CD4-positive, alpha-beta memory T cell (primary cell): ENCODE measurements at regions of chr1 and their contacts with region 1.

Region 1: DNA sequence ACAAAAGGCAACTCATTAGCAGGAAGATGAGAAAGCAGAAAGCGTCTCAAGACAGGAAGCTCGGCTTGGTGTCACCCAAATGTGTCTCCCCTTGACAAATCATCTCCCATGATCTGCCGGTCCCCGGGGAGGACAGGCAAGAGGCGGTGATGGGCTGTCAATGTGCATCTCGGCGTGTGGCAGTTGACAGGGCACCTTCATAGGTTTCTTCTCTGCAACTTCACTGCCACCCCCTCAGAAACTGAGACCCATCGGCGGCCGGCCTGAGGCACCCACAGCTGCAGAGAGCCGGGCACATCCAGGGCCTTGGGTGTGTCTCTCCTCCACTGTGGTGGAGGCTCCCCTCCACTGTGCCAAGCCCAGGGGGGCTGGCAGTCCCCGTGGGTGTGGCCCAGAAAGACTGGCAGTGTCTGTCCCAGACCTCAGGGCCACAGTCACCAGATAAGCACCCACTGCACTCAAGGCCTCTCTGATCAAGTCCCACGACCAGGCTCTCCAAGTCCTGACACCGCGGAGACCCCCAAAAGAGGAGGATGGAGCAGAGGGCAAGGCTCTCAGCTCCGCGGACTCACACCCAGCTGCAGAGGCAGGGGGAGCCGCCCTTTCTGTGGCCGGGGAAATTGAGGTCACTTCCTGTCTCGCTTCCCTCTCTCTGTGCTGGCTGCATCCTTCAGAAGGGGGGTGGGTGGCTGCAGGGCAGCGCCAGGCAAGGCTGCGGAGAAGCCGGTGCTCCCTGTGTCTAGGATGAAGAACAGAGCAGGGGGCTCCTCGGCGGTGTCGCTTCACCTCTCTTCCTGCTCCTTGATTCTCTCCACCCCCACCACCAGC is 39.6 kb upstream of the LBR start:
- DNase-seq: peak; percentile 83 to 89 (median 85)
- H3K4me3 ChIP-seq: peak overlapping the region; percentile 74 to 85
- H3K4me3 Mint-ChIP-seq: peak overlapping the region; percentile 90 to 94 (median 92)
- H3K27ac ChIP-seq: peak overlapping the region; percentile 84
- H3K27ac Mint-ChIP-seq: peak overlapping the region; percentile 92 to 98 (median 97)
- H3K4me1 ChIP-seq: peaks cover 48% of the 10 kb centered on the region
- H3K4me1 Mint-ChIP-seq: peaks cover 27 to 63% (median 45%) of the 10 kb centered on the region in 4 donors
- H3K27me3 ChIP-seq: no peaks in the 10 kb centered on the region
- H3K27me3 Mint-ChIP-seq: no peaks in the 10 kb centered on the region

Region 2: GRCh38 chr1:225428068-225428880 is 39.1 kb before region 1 on chr1:
- CTCF ChIA-PET with region 1: interaction called, 10 read pairs
- POLR2A ChIA-PET with region 1: interaction called, 166 read pairs
- intact Hi-C with region 1: loop called (anchors 1 kb)
- DNase-seq: peak; percentile 91 to 92 (median 91)
- H3K4me3 ChIP-seq: peak overlapping the region; percentile 68 to 75
- H3K4me3 Mint-ChIP-seq: peak overlapping the region; percentile 84 to 97 (median 92)
- H3K27ac ChIP-seq: peak overlapping the region; percentile 78
- H3K27ac Mint-ChIP-seq: peak overlapping the region; percentile 86 to 97 (median 96)
- H3K4me1 ChIP-seq: peaks cover 41% of the 10 kb centered on the region
- H3K4me1 Mint-ChIP-seq: peaks cover 38 to 49% (median 44%) of the 10 kb centered on the region in 4 donors
- H3K27me3 ChIP-seq: no peaks in the 10 kb centered on the region
- H3K27me3 Mint-ChIP-seq: no peaks in the 10 kb centered on the region

Region 3: DNA sequence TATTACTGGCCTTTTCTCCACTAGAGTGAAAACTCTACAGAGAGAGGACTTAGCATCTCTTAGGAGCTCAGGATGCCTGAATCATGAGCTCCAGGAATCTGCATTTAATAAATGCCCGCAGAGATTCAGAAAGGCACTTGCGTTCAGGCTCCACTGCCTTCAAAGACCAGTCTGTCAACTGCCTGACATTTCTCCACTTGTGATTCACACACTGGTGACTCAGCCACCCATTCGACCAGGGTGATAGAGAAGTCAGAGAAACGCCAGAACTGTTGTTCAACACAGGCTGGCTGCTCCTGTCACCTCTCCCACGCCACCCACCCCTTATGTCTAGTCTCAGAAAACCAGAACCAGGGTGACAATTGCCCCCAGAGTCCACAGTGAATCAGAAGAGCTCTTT is 12.7 kb before region 1 on chr1:
- CTCF ChIA-PET with region 1: interaction called, 4 read pairs
- POLR2A ChIA-PET with region 1: interaction called, 11 read pairs
- intact Hi-C with region 1: no loop called
- DNase-seq: no peak
- H3K4me3 ChIP-seq: no peak overlapping the region
- H3K4me3 Mint-ChIP-seq: no peak overlapping the region
- H3K27ac ChIP-seq: no peak overlapping the region
- H3K27ac Mint-ChIP-seq: peak overlapping the region in 2 of 7 donors; percentile 79 to 86
- H3K4me1 ChIP-seq: peaks cover 6% of the 10 kb centered on the region
- H3K4me1 Mint-ChIP-seq: peaks cover 2 to 23% (median 19%) of the 10 kb centered on the region in 4 donors
- H3K27me3 ChIP-seq: no peaks in the 10 kb centered on the region
- H3K27me3 Mint-ChIP-seq: no peaks in the 10 kb centered on the region

Region 4: GRCh38 chr1:225498549-225499136 is 31.2 kb after region 1 on chr1:
- CTCF ChIA-PET with region 1: no interaction called
- POLR2A ChIA-PET with region 1: no interaction called
- intact Hi-C with region 1: no loop called
- DNase-seq: no peak
- H3K4me3 ChIP-seq: no peak overlapping the region
- H3K4me3 Mint-ChIP-seq: no peak overlapping the region
- H3K27ac ChIP-seq: no peak overlapping the region
- H3K27ac Mint-ChIP-seq: no peak overlapping the region
- H3K4me1 ChIP-seq: no peaks in the 10 kb centered on the region
- H3K4me1 Mint-ChIP-seq: peaks cover 0 to 3% (median 0%) of the 10 kb centered on the region in 4 donors
- H3K27me3 ChIP-seq: peaks cover 4% of the 10 kb centered on the region
- H3K27me3 Mint-ChIP-seq: peaks cover 7 to 8% of the 10 kb centered on the region in 2 donors

Region 5: GRCh38 chr1:225508538-225509375 is 41.4 kb after region 1 on chr1:
- CTCF ChIA-PET with region 1: no interaction called
- POLR2A ChIA-PET with region 1: no interaction called
- intact Hi-C with region 1: no loop called
- DNase-seq: no peak
- H3K4me3 ChIP-seq: no peak overlapping the region
- H3K4me3 Mint-ChIP-seq: no peak overlapping the region
- H3K27ac ChIP-seq: no peak overlapping the region
- H3K27ac Mint-ChIP-seq: no peak overlapping the region
- H3K4me1 ChIP-seq: no peaks in the 10 kb centered on the region
- H3K4me1 Mint-ChIP-seq: no peaks in the 10 kb centered on the region
- H3K27me3 ChIP-seq: no peaks in the 10 kb centered on the region
- H3K27me3 Mint-ChIP-seq: peaks cover 9 to 10% of the 10 kb centered on the region in 2 donors

Region 6: GRCh38 chr1:225896937-225897549 is 429.6 kb after region 1 on chr1:
- CTCF ChIA-PET with region 1: no interaction called
- POLR2A ChIA-PET with region 1: interaction called, 10 read pairs
- intact Hi-C with region 1: no loop called
- DNase-seq: peak; percentile 87 to 92 (median 88)
- H3K4me3 ChIP-seq: peak overlapping the region in 1 of 2 donors; percentile 13
- H3K4me3 Mint-ChIP-seq: peak overlapping the region; percentile 72 to 92 (median 82)
- H3K27ac ChIP-seq: peak overlapping the region; percentile 72
- H3K27ac Mint-ChIP-seq: peak overlapping the region; percentile 94 to 99 (median 98)
- H3K4me1 ChIP-seq: peaks cover 45% of the 10 kb centered on the region
- H3K4me1 Mint-ChIP-seq: peaks cover 34 to 65% (median 46%) of the 10 kb centered on the region in 4 donors
- H3K27me3 ChIP-seq: no peaks in the 10 kb centered on the region
- H3K27me3 Mint-ChIP-seq: no peaks in the 10 kb centered on the region

Region 7: GRCh38 chr1:225987491-225988316 is 520.3 kb after region 1 on chr1:
- CTCF ChIA-PET with region 1: interaction called, 11 read pairs
- POLR2A ChIA-PET with region 1: interaction called, 4 read pairs
- intact Hi-C with region 1: no loop called
- DNase-seq: peak in 4 of 5 donors; percentile 27 to 45 (median 40)
- H3K4me3 ChIP-seq: no peak overlapping the region
- H3K4me3 Mint-ChIP-seq: no peak overlapping the region
- H3K27ac ChIP-seq: no peak overlapping the region
- H3K27ac Mint-ChIP-seq: peak overlapping the region in 5 of 7 donors; percentile 37 to 80 (median 51)
- H3K4me1 ChIP-seq: peaks cover 19% of the 10 kb centered on the region
- H3K4me1 Mint-ChIP-seq: peaks cover 17 to 37% (median 27%) of the 10 kb centered on the region in 4 donors
- H3K27me3 ChIP-seq: no peaks in the 10 kb centered on the region
- H3K27me3 Mint-ChIP-seq: no peaks in the 10 kb centered on the region

Region 8: GRCh38 chr1:226046240-226046639 is 578.8 kb after region 1 on chr1:
- CTCF ChIA-PET with region 1: no interaction called
- POLR2A ChIA-PET with region 1: no interaction called
- intact Hi-C with region 1: no loop called
- DNase-seq: no peak
- H3K4me3 ChIP-seq: no peak overlapping the region
- H3K4me3 Mint-ChIP-seq: no peak overlapping the region
- H3K27ac ChIP-seq: no peak overlapping the region
- H3K27ac Mint-ChIP-seq: no peak overlapping the region
- H3K4me1 ChIP-seq: no peaks in the 10 kb centered on the region
- H3K4me1 Mint-ChIP-seq: peaks cover 0 to 9% (median 4%) of the 10 kb centered on the region in 4 donors
- H3K27me3 ChIP-seq: no peaks in the 10 kb centered on the region
- H3K27me3 Mint-ChIP-seq: no peaks in the 10 kb centered on the region

Region 9: GRCh38 chr1:226186124-226187018 is 719.0 kb after region 1 on chr1 and contains the start of gene ACBD3:
- CTCF ChIA-PET with region 1: no interaction called
- POLR2A ChIA-PET with region 1: no interaction called
- intact Hi-C with region 1: loop called (anchors 2 kb)
- DNase-seq: peak; percentile 82 to 91 (median 84)
- H3K4me3 ChIP-seq: peak within 1 kb of the TSS; percentile 98 to 99
- H3K4me3 Mint-ChIP-seq: peak within 1 kb of the TSS; percentile 92 to 98 (median 95)
- H3K27ac ChIP-seq: peak within 1 kb of the TSS; percentile 70
- H3K27ac Mint-ChIP-seq: peak within 1 kb of the TSS; percentile 90 to 97 (median 95)
- H3K4me1 ChIP-seq: peaks cover 43% of the 10 kb centered on the region
- H3K4me1 Mint-ChIP-seq: peaks cover 23 to 40% (median 31%) of the 10 kb centered on the region in 4 donors
- H3K27me3 ChIP-seq: no peaks in the 10 kb centered on the region
- H3K27me3 Mint-ChIP-seq: no peaks in the 10 kb centered on the region
- total RNA-seq, gene ACBD3: 28.7 to 29.7 TPM

Region 10: GRCh38 chr1:226261817-226262216 is 794.4 kb after region 1 on chr1:
- CTCF ChIA-PET with region 1: no interaction called
- POLR2A ChIA-PET with region 1: no interaction called
- intact Hi-C with region 1: no loop called
- DNase-seq: no peak
- H3K4me3 ChIP-seq: no peak overlapping the region
- H3K4me3 Mint-ChIP-seq: no peak overlapping the region
- H3K27ac ChIP-seq: no peak overlapping the region
- H3K27ac Mint-ChIP-seq: no peak overlapping the region
- H3K4me1 ChIP-seq: no peaks in the 10 kb centered on the region
- H3K4me1 Mint-ChIP-seq: no peaks in the 10 kb centered on the region
- H3K27me3 ChIP-seq: no peaks in the 10 kb centered on the region
- H3K27me3 Mint-ChIP-seq: no peaks in the 10 kb centered on the region